ENCODE measurements at regions of chr5 and their contacts with region 1.

Region 1: DNA sequence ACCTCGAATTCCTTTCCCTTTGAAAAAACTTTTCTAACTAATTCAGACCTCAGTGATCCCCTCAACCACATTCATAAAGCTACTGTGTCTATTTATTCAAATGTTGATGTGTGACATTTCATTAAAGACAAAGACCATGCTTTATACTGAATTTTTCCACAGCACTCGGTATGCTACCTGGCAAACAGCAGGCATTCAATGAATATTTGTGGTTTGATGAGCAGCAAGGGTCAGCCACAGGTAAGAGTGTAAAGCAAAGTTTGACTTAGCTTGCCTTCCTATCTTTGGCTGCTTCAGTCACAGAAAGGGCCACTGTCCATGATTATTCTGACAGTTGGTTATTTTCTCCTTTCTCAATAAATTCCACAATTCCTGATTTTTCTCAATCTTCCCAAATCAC is 5.1 kb upstream of the CDC42SE2 start:
- DNase-seq: no peak
- H3K4me3 Mint-ChIP-seq: no peak overlapping the region
- H3K27ac Mint-ChIP-seq: peak overlapping the region; percentile 89
- H3K4me1 Mint-ChIP-seq: peaks cover 36% of the 10 kb centered on the region
- H3K27me3 Mint-ChIP-seq: no peaks in the 10 kb centered on the region
- CTCF ChIP-seq: no peak

Region 2: GRCh38 chr5:130874861-130875417 is 383.8 kb before region 1 on chr5:
- CTCF ChIA-PET with region 1: no interaction called
- POLR2A ChIA-PET with region 1: no interaction called
- intact Hi-C with region 1: no loop called
- DNase-seq: no peak
- H3K4me3 Mint-ChIP-seq: no peak overlapping the region
- H3K27ac Mint-ChIP-seq: no peak overlapping the region
- H3K4me1 Mint-ChIP-seq: peaks cover 13% of the 10 kb centered on the region
- H3K27me3 Mint-ChIP-seq: no peaks in the 10 kb centered on the region
- CTCF ChIP-seq: no peak

Region 3: DNA sequence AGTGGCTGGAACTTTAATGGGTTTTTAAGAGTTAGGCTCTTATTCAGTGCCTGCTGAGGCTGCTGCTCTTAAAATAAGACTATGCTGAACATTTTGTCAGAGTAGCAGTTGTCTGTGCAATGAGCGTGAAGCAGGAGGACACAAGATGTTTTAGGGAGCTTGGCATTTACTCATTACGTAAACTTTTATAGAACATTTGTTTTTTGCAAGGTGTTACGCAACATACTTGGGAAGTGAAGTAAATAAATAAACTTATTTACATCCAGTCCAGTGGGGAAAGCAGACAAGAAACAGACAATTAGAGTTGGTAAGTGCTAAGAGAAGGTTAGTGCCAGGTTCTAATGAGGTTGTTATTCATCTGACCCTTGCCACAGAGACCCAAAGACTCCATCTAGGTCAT is 319.7 kb before region 1 on chr5:
- CTCF ChIA-PET with region 1: no interaction called
- POLR2A ChIA-PET with region 1: no interaction called
- intact Hi-C with region 1: no loop called
- DNase-seq: peak; percentile 27
- H3K4me3 Mint-ChIP-seq: no peak overlapping the region
- H3K27ac Mint-ChIP-seq: no peak overlapping the region
- H3K4me1 Mint-ChIP-seq: peaks cover 5% of the 10 kb centered on the region
- H3K27me3 Mint-ChIP-seq: no peaks in the 10 kb centered on the region
- CTCF ChIP-seq: no peak

Region 4: DNA sequence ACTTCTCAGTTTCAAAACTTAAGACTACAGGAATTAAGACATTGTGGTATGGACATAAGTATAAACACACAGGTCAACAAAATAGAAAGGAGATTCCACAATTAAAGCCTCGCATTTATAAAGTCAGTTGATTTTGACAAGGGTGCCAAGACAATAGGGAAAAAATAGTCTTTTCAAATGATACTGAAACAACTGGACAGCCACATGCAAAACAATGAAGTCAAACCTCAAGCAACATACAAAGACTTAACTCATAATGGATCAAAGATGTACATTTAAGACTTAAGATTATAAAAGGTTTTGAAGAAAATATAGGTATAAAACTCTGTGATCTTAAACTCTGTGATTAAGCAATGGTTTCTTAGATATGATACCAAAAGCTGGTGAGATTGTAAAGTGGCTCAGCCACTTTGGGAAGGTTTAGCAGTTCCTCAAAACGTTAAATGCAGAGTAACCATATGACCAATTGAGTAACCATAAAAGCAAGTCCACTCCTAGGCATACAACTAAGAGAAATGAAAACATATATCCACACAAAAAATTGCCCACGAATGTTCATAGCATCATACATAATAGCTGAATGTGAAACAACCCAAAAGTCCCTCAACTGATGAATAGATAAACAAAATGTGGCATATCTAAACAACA is 115.6 kb before region 1 on chr5:
- CTCF ChIA-PET with region 1: no interaction called
- POLR2A ChIA-PET with region 1: no interaction called
- intact Hi-C with region 1: no loop called
- DNase-seq: no peak
- H3K4me3 Mint-ChIP-seq: no peak overlapping the region
- H3K27ac Mint-ChIP-seq: no peak overlapping the region
- H3K4me1 Mint-ChIP-seq: no peaks in the 10 kb centered on the region
- H3K27me3 Mint-ChIP-seq: no peaks in the 10 kb centered on the region
- CTCF ChIP-seq: no peak

Region 5: DNA sequence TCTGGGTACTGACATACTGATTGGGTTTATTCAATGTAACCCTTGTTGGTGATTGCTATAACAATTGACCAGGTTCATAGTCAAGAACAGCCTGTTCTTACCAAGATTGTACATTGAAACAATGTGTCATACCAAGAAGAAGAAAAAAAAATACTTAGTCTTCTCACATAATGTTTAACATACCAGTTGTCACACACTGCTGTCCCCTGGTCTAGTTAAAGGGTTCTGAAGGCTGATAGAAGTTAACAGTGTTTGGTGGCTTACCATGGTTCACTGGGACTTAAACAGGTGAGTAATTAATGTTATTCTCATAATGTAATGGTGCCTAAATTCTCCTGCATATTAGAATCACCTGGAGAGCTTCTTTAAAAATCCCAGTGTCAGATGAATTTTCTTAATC is 13.4 kb before region 1 on chr5:
- CTCF ChIA-PET with region 1: interaction called, 7 read pairs
- POLR2A ChIA-PET with region 1: interaction called, 11 read pairs
- intact Hi-C with region 1: no loop called
- DNase-seq: no peak
- H3K4me3 Mint-ChIP-seq: no peak overlapping the region
- H3K27ac Mint-ChIP-seq: no peak overlapping the region
- H3K4me1 Mint-ChIP-seq: peaks cover 11% of the 10 kb centered on the region
- H3K27me3 Mint-ChIP-seq: no peaks in the 10 kb centered on the region
- CTCF ChIP-seq: no peak

Region 6: DNA sequence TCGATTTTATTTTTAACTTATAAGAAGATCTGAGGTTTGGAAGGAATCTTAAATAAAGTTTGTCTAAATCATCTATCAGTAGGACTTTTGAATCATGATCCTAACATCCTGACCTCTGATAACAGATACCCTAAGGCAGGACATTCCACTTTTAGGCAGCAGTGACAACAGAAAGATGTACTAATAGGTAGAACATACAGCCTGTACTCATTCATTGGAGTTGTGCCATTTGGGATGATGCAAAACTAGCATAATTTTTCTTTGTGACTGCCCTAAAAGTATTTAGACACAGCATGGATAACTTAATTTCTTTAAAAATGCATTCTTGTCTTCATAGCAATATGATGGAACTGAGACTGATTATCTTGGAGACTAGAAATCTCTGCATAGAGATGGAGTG is 44.8 kb after region 1 on chr5:
- CTCF ChIA-PET with region 1: no interaction called
- POLR2A ChIA-PET with region 1: interaction called, 110 read pairs
- intact Hi-C with region 1: no loop called
- DNase-seq: peak; percentile 83
- H3K4me3 Mint-ChIP-seq: peak overlapping the region; percentile 10
- H3K27ac Mint-ChIP-seq: peak overlapping the region; percentile 97
- H3K4me1 Mint-ChIP-seq: peaks cover 67% of the 10 kb centered on the region
- H3K27me3 Mint-ChIP-seq: no peaks in the 10 kb centered on the region
- CTCF ChIP-seq: no peak

Region 7: GRCh38 chr5:131745703-131746102 is 487.0 kb after region 1 on chr5:
- CTCF ChIA-PET with region 1: no interaction called
- POLR2A ChIA-PET with region 1: no interaction called
- intact Hi-C with region 1: no loop called
- DNase-seq: peak; percentile 18
- H3K4me3 Mint-ChIP-seq: no peak overlapping the region
- H3K27ac Mint-ChIP-seq: peak overlapping the region; percentile 28
- H3K4me1 Mint-ChIP-seq: peaks cover 29% of the 10 kb centered on the region
- H3K27me3 Mint-ChIP-seq: no peaks in the 10 kb centered on the region
- CTCF ChIP-seq: no peak

Measured in MCF 10A (cell line).